HepG2 (cell line): ENCODE measurements at regions of chr14 and their contacts with region 1.

Region 1: GRCh38 chr14:102524466-102525218 is 15.1 kb upstream of the ANKRD9 start:
- DNase-seq: peak; percentile 96
- ATAC-seq: peak; percentile 99
- H3K4me3 ChIP-seq: peak overlapping the region; percentile 72 to 81 (median 75)
- H3K27ac ChIP-seq: peak overlapping the region; percentile 57
- H3K4me1 ChIP-seq: peaks cover 38% of the 10 kb centered on the region
- H3K27me3 ChIP-seq: no peaks in the 10 kb centered on the region; a peak in 1 of 5 replicates
- CTCF ChIP-seq: peak; percentile 99
- EP300 ChIP-seq: no peak
- POLR2A ChIP-seq: peak; percentile 79 to 97
- RAD21 ChIP-seq: peak; percentile 98

Region 2: DNA sequence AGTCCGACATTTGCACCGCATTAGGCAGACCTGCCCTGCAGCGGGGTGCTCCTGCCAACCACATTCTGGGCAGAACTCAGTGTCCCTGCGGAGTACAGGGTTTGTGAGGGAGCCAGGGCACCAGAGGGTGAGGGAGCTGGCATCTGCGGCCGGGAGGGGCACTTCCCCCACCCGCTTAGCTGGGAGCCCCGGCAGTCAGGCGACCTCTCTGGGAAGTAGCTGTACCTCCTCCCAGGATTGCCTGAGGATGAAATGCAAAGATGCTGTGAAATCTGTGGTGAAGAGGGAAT is 73.6 kb before region 1 on chr14:
- CTCF ChIA-PET with region 1: no interaction called
- POLR2A ChIA-PET with region 1: no interaction called
- in situ Hi-C with region 1: no loop called
- intact Hi-C with region 1: no loop called
- DNase-seq: no peak
- ATAC-seq: no peak
- H3K4me3 ChIP-seq: no peak overlapping the region
- H3K27ac ChIP-seq: no peak overlapping the region
- H3K4me1 ChIP-seq: no peaks in the 10 kb centered on the region
- H3K27me3 ChIP-seq: no peaks in the 10 kb centered on the region
- CTCF ChIP-seq: no peak
- EP300 ChIP-seq: no peak
- POLR2A ChIP-seq: no peak
- RAD21 ChIP-seq: no peak

Region 3: DNA sequence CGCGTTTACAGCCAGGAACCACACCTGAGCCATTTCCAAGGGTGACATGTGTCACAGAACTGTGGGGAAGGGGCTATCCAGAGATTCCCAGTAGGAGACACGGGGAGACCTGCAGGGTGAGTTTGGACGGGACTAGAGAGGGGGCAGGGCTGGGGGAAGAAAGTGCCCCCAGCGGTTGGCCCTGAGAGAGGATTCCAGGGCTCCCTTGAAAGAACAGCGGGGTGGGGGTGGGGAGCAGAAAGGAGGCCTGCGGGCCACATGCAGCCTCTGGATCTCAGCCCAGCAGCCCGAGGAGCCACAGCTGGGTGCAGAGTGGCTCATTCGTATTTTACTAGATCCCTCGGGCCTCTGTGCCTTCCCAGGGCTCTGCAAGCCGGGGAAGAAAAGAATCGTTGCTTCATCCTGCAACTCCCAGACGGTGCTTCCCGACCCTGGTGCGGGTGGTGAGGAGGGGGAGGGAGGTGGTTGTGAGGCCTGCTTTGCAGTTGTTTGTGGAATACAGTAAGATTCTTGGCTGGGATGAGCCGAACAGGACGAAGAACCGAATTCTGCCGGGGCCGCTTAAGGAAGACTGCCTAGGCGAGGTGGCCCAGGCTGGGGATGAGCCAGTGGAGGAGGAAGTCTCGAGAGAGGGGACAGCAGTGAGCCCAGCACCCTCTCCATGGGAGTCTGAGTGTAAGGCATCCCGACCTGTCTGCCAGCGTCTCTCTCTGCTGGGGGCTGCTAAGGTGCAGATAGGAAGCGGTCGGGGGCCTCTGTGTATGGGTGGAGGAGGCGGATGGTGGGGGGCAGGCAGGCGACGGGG is 21.0 kb after region 1 on chr14:
- CTCF ChIA-PET with region 1: no interaction called
- POLR2A ChIA-PET with region 1: interaction called, 102 read pairs
- in situ Hi-C with region 1: no loop called
- intact Hi-C with region 1: no loop called
- DNase-seq: peak; percentile 63
- ATAC-seq: peak; percentile 52
- H3K4me3 ChIP-seq: peak overlapping the region; percentile 67 to 92 (median 82)
- H3K27ac ChIP-seq: peak overlapping the region; percentile 93
- H3K4me1 ChIP-seq: peaks cover 59% of the 10 kb centered on the region
- H3K27me3 ChIP-seq: no peaks in the 10 kb centered on the region; a peak in 1 of 5 replicates
- CTCF ChIP-seq: peak; percentile 49
- EP300 ChIP-seq: no peak; a peak in 1 of 4 replicates
- POLR2A ChIP-seq: peak in 1 of 2 experiments; percentile 58; a peak in 1 of 4 replicates
- RAD21 ChIP-seq: 0 out of 2 replicates have a peak, but pooled peaks have one; percentile 7

Region 4: DNA sequence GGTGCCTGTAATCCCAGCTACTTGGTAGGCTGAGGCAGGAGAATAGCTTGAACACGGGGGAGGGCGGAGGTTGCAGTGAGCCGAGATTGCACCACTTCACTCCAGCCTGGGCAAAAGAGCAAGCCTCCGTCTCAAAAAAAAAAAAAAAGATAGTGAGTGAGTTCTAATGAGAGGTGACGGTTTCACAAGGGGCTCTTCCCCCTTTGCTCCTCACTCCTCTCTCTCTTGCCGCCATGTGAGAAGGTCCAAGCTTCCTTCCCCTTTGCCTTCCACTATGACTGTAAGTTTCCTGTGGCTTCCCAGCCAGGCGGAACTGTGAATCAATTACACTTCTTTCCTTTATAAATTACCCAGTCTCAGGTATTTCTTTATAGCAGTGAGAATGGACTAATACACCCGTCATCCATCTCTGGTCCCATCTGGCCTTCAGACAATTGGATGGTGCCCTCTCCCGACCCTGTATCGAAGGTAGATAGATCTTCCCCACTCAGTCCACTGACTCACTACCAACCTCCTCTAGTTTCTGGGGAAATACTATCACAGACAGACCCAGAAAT is 40.8 kb after region 1 on chr14:
- CTCF ChIA-PET with region 1: no interaction called
- POLR2A ChIA-PET with region 1: no interaction called
- in situ Hi-C with region 1: no loop called
- intact Hi-C with region 1: no loop called
- DNase-seq: no peak
- ATAC-seq: no peak
- H3K4me3 ChIP-seq: no peak overlapping the region
- H3K27ac ChIP-seq: no peak overlapping the region
- H3K4me1 ChIP-seq: peaks cover 54% of the 10 kb centered on the region
- H3K27me3 ChIP-seq: no peaks in the 10 kb centered on the region
- CTCF ChIP-seq: no peak
- EP300 ChIP-seq: no peak
- POLR2A ChIP-seq: no peak
- RAD21 ChIP-seq: no peak

Region 5: DNA sequence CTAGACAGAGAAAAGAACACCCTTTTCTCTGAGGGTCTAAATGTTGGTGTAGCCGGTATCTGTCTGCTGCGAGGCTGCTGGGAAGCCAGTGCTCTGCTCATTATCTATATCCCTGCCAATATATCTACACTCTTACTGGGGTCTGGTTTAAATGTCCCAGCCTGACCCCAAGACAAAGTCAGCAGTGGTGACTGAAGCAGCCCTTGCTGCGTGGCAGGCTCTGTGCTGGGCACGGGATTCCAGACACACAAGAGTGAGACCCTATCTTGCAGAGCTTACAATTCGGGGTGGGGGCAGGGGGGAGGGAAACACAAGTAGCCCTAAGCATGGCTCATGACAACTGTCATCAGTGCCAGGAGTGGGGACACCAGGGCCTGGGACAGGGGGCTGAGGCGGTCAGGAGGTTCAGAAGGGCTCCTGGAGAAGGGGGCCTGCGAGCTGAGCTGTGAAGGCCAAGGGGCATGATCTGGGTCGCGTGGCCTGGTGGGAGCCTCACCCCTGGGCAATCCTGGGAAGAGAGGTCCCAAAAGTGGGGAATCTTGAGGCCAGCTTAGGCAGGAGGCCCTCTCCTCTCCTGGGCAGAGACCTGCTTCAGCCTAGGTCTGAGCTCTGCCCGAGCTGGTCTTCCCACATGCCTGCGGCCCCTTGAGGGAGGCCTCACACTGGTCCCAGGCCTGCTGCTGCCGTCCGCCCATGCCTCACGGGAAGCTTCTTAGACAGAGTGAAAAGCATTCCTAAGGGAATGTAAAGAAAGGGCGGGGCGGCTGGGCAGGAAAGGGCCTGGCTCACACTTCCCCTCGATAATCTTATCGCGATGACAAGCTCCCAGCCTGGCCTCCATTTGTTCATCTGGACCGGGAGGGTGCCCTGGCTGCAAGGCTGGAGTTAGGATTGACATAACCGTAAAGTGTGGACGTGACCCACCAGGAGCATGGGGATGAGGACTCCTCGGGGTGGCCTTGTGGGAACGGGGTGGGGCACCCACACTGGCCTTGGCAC is 60.5 kb after region 1 on chr14:
- CTCF ChIA-PET with region 1: interaction called, 5 read pairs
- POLR2A ChIA-PET with region 1: interaction called, 23 read pairs
- in situ Hi-C with region 1: no loop called
- intact Hi-C with region 1: no loop called
- DNase-seq: no peak
- ATAC-seq: peak; percentile 81
- H3K4me3 ChIP-seq: peak overlapping the region in 2 of 3 experiments; percentile 13 to 58; a peak in 4 of 6 replicates
- H3K27ac ChIP-seq: no peak overlapping the region
- H3K4me1 ChIP-seq: peaks cover 76% of the 10 kb centered on the region
- H3K27me3 ChIP-seq: no peaks in the 10 kb centered on the region
- CTCF ChIP-seq: no peak
- EP300 ChIP-seq: no peak
- POLR2A ChIP-seq: no peak
- RAD21 ChIP-seq: no peak

Region 6: GRCh38 chr14:102683399-102684297 is 159.0 kb after region 1 on chr14:
- CTCF ChIA-PET with region 1: no interaction called
- POLR2A ChIA-PET with region 1: interaction called, 6 read pairs
- in situ Hi-C with region 1: no loop called
- intact Hi-C with region 1: loop called (anchors 5 kb)
- DNase-seq: peak; percentile 61
- ATAC-seq: peak; percentile 95
- H3K4me3 ChIP-seq: peak overlapping the region; percentile 55 to 71 (median 60)
- H3K27ac ChIP-seq: peak overlapping the region; percentile 91
- H3K4me1 ChIP-seq: peaks cover 51% of the 10 kb centered on the region
- H3K27me3 ChIP-seq: no peaks in the 10 kb centered on the region
- CTCF ChIP-seq: peak; percentile 65
- EP300 ChIP-seq: no peak
- POLR2A ChIP-seq: peak; percentile 29 to 56; a peak in 3 of 4 replicates
- RAD21 ChIP-seq: no peak